PC-9 (cell line): ENCODE measurements at regions of chr1 and their contacts with region 1.

Region 1: GRCh38 chr1:35079003-35079930 is at the start of gene ZMYM1:
- DNase-seq: peak; percentile 80 to 84
- H3K4me3 ChIP-seq: peak within 1 kb of the TSS; percentile 83
- H3K27ac ChIP-seq: peak within 1 kb of the TSS; percentile 88
- H3K4me1 ChIP-seq: peaks cover 19% of the 10 kb centered on the region
- H3K27me3 ChIP-seq: no peaks in the 10 kb centered on the region
- CTCF ChIP-seq: no peak
- total RNA-seq, gene ZMYM1: 31.9 and 49.7 TPM in 2 replicates

Region 2: DNA sequence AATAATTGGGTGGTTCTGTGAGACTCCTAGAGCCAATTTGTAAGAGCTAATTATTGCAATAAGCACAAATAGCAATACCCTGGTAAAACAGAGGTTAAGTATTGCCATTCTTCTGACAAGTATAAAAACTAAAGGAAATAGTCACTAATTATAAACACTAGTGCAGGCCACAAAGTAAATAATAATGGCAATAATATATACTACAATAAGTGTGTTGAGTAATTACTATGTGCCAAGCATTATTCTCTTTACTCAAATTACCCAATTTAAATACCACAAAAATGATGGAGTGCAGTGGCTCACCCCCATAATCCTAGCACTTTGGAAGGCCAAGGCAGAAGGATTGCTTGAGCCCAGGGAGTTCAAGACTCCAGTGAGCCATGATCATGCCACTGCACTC is 62.9 kb before region 1 on chr1:
- CTCF ChIA-PET with region 1: no interaction called
- POLR2A ChIA-PET with region 1: interaction called, 14 read pairs
- intact Hi-C with region 1: no loop called
- DNase-seq: no peak
- H3K4me3 ChIP-seq: no peak overlapping the region
- H3K27ac ChIP-seq: no peak overlapping the region
- H3K4me1 ChIP-seq: no peaks in the 10 kb centered on the region
- H3K27me3 ChIP-seq: no peaks in the 10 kb centered on the region
- CTCF ChIP-seq: no peak

Region 3: DNA sequence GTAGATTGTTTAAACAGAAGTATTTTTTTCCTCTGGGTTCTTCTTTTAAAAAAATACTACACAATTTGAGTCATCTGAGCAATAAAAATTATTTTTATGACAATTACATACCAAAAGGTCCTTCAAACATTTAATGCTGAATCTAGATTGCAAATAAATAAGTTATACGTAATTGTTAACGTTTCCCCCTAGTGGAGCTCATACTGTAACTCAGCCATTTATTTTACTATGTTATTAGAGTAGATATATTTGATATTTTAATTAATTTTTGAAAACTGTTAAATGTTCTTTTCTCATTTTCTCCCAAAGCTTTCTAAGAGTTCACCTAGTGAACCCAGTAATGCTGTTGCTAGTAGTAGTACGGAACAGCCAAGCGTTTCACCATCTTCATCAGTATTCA is 33.4 kb after region 1 on chr1:
- CTCF ChIA-PET with region 1: interaction called, 11 read pairs
- POLR2A ChIA-PET with region 1: no interaction called
- intact Hi-C with region 1: no loop called
- DNase-seq: no peak
- H3K4me3 ChIP-seq: no peak overlapping the region
- H3K27ac ChIP-seq: no peak overlapping the region
- H3K4me1 ChIP-seq: no peaks in the 10 kb centered on the region
- H3K27me3 ChIP-seq: no peaks in the 10 kb centered on the region
- CTCF ChIP-seq: peak; percentile 48

Region 4: DNA sequence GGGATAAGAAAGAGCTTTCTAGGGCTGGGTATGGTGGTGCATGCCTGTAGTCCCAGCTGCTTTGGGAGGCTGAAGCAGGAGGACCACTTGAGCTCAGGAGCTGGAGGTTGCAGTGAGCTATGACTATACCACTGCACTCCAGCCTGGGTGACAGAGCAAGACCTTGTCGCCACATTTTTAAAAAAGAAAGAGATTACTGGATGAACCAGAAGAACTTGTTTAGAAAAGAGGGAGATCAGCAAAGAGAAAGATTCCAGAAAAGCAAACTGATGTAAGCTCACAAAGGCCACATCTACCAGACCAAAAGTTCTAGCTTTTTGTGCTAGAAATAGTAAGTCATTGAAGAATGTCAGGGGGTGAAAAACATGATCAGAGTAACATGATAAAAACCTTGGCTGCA is 360.4 kb after region 1 on chr1:
- CTCF ChIA-PET with region 1: no interaction called
- POLR2A ChIA-PET with region 1: interaction called, 12 read pairs
- intact Hi-C with region 1: no loop called
- DNase-seq: peak in 1 of 2 experiments; percentile 44
- H3K4me3 ChIP-seq: no peak overlapping the region
- H3K27ac ChIP-seq: no peak overlapping the region
- H3K4me1 ChIP-seq: peaks cover 9% of the 10 kb centered on the region; the same call in 1 of the 2 replicates
- H3K27me3 ChIP-seq: no peaks in the 10 kb centered on the region
- CTCF ChIP-seq: no peak